Activated naive CD4-positive, alpha-beta T cell treated with anti-CD3 and anti-CD28 coated beads, Interleukin-2, amount 10 ng/mL, durations not matched to agents 7 days and 5 days (primary cell): ENCODE measurements at regions of chr7 and their contacts with region 1.

Region 1: DNA sequence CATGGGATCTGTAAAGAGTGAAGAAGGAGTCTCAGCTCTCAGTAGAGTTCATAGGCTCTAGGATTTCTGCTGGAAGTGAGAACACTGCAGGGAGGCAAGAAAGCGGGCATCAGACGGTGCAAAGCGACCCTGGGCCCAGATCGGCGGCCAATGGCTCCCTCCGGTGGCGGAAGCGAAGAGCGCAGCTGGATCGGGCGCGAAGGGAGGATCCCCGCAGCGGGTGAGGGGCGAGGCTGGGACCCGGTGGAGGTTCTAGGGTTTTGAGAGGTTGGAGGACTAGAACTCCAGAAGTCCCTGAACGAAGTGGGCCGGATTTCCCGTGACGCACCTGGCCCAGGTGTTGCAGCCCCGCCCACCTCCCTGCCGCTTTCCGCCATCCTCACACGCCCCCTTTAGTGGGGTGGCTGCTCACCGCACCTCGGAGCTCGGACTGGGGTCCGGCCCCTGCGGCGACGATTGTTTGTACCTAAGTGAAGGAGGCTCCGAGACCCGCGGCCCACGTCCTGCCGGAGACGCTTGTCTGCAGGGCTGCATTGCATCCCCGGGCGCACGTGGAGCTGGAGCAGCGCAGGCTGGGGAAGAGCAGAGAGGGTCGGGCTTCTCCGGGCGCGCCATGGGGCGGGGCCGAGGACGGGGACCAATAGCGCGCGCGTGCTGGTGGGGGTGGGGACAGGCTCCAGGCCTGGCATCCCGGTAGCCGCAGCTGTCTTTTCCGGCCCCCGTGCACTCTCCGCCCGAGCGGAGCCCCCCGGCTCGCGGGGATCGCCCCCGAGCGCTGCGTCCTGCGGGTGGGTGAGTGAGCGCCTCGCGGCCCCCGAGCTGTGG is at the start of gene SLC12A9:
- DNase-seq: peak; percentile 93
- H3K4me3 Mint-ChIP-seq: peak within 1 kb of the TSS; percentile 96
- H3K27ac Mint-ChIP-seq: peak within 1 kb of the TSS; percentile 89
- H3K4me1 Mint-ChIP-seq: peaks cover 20% of the 10 kb centered on the region
- H3K27me3 Mint-ChIP-seq: no peaks in the 10 kb centered on the region

Region 2: DNA sequence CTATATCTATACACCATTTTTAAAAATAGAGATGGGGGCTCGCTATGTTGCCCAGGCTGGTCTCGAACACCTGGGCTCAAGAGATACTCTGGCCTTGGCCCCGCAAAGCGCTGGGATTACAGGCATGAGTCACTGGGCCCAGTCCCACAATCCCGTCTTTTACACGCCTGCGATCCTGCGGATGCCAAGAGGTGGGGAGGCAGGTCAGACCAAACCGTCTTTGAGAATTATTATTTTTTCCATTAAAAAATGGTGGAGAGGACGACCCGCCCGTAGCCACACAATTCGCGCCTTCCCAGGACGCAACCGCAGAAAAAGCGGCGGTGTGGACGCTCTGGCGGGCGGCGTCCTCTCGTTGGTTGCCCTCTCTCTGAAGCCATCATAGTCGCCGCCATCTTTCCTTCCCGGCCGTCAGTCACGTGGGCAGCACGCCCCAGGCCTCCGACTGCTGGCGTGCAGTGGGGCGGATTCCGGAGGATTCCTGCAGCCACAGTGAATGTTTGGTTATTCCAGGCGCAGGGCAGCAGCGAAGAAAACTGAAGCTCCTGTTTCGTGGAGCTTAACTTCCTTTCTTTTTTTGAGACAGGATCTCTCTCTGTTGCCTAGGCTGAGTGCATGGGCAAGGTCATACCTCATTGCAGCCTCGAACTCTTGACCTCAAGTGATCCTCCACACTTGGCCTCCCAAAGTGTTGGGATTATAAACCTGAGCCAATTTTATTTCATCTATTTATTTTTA is 15.0 kb before region 1 on chr7:
- CTCF ChIA-PET with region 1: interaction called, 13 read pairs
- DNase-seq: peak; percentile 83
- H3K4me3 Mint-ChIP-seq: peak overlapping the region; percentile 69
- H3K27ac Mint-ChIP-seq: peak overlapping the region; percentile 73
- H3K4me1 Mint-ChIP-seq: peaks cover 20% of the 10 kb centered on the region
- H3K27me3 Mint-ChIP-seq: peaks cover 9% of the 10 kb centered on the region

Region 3: GRCh38 chr7:100957832-100958421 is 105.7 kb after region 1 on chr7:
- CTCF ChIA-PET with region 1: no interaction called
- DNase-seq: no peak
- H3K4me3 Mint-ChIP-seq: no peak overlapping the region
- H3K27ac Mint-ChIP-seq: no peak overlapping the region
- H3K4me1 Mint-ChIP-seq: no peaks in the 10 kb centered on the region
- H3K27me3 Mint-ChIP-seq: peaks cover 5% of the 10 kb centered on the region

Region 4: DNA sequence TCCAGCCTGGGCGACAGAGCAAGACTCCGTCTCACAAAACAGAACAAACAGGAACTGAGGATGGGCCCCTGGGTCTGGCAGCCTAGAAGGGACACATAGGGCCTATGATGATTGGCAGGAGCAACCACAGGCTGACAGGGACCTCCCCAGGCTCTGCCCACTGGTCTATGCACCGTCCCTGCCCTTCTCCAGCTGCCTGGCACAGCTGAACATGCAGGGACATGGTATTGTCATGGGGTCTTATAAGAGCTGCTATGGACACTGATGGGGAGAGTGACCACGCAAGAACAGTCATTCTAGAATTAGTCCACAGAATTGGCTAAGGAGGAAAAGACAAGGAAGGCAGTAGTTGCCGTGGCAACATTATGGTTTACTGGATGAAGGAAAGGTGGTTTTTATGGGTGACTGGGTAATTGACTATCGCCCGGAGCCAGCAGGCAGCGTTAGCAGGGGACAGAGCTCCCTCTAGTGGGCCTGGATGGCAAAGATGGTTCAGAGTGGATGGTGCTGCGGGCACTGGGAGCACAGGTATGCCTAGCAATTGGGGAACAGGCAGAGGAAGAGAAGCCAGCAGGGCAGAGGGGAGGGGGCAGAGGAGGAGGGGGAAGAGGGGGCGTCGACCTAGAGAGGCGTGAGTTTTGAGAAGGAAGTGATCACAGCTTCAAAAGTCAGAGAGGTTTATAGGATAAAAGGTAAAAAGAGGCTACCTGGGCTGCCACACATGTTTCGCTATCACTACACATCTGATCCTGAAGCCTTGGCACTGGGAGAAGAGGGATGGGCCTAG is 225.2 kb after region 1 on chr7:
- CTCF ChIA-PET with region 1: no interaction called
- DNase-seq: peak; percentile 90
- H3K4me3 Mint-ChIP-seq: no peak overlapping the region
- H3K27ac Mint-ChIP-seq: no peak overlapping the region
- H3K4me1 Mint-ChIP-seq: peaks cover 5% of the 10 kb centered on the region
- H3K27me3 Mint-ChIP-seq: peaks cover 30% of the 10 kb centered on the region